ENCODE measurements at regions of chr20 and their contacts with region 1.

Region 1: GRCh38 chr20:48620519-48621254 is 207.1 kb downstream of the PREX1 start:
- DNase-seq: no peak
- H3K4me3 ChIP-seq: peak overlapping the region; percentile 42
- H3K27ac ChIP-seq: no peak overlapping the region
- H3K27me3 ChIP-seq: peaks cover 5% of the 10 kb centered on the region
- CTCF ChIP-seq: peak; percentile 97

Region 2: DNA sequence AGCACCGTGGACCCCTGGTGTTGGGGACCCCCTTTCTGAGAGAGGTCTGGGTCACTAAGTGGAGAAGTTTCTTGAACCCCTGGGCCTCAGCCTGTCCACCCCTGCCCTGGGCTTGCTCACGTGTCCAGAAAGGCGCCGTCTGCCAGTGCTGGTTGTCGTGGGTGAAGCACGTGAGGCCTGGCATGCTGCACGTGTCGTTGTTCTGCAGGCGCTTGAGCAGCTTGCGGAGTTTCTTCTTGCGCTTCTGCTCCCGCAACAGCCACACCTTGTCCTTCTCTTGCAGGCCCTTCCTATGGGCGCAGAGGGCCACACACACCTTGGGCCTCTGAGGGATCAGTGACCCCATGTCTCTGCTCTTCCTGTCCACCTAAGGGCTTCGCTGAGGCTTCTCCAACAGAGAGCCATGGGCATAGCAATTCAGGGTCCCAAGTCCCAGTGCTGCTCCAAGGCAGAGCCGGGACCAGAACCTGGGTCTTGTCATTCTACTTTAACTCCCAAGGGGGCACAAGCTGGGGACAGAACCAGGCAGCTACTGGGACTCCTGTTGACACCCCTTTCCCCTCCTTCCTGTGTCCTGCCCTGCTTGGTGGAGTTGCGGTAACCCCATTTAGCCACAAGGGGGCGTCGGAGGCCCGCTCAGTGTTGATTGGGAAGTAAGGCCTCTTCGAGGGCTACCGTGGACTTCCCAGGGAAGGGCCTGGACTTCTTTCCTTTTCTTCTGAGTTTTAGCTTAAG is 957.2 kb before region 1 on chr20:
- CTCF ChIA-PET with region 1: interaction called, 133 read pairs
- POLR2A ChIA-PET with region 1: no interaction called
- DNase-seq: peak; percentile 57
- H3K4me3 ChIP-seq: no peak overlapping the region
- H3K27ac ChIP-seq: no peak overlapping the region
- H3K27me3 ChIP-seq: no peaks in the 10 kb centered on the region
- CTCF ChIP-seq: peak; percentile 97

Region 3: DNA sequence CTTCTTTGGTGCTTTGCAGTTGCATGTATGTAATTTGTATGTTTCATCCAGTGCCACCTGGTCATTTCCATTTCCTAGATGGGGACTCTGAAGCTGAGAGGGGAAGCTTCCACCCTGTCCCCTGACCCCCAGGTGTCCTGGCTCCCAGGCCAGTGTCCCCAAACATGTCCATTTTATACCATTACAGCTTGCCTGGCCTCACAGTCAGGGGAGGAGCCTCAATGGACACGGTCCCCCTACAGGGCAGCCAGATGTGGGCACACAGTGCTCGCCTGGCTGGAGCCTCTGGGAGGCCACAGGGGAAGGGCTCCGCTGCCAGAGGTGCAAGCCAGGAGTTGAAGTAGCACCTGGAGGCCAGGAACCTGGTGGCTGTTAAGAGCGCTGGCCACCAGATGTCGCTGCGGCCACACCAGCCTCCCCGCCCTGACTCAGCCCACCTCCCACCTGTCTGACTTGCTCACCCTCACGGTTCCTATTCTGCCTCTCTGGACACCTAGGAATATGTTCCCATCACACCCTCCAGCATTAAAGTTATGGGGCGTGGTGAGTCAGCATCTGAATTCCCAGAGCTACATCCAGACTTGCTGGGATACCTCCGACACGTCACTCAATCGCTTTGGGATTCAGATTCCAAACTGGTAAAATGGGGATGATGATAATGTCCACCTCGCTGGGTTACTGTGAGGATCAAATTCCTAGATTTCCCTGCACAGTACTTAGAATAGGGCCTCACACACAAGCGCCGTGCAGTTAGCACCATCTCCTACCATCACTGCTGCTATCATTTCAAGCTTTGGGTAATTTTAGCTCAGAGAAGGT is 942.8 kb before region 1 on chr20:
- CTCF ChIA-PET with region 1: interaction called, 142 read pairs
- POLR2A ChIA-PET with region 1: no interaction called
- DNase-seq: no peak
- H3K4me3 ChIP-seq: no peak overlapping the region
- H3K27ac ChIP-seq: no peak overlapping the region
- H3K27me3 ChIP-seq: peaks cover 10% of the 10 kb centered on the region
- CTCF ChIP-seq: peak; percentile 74

Region 4: DNA sequence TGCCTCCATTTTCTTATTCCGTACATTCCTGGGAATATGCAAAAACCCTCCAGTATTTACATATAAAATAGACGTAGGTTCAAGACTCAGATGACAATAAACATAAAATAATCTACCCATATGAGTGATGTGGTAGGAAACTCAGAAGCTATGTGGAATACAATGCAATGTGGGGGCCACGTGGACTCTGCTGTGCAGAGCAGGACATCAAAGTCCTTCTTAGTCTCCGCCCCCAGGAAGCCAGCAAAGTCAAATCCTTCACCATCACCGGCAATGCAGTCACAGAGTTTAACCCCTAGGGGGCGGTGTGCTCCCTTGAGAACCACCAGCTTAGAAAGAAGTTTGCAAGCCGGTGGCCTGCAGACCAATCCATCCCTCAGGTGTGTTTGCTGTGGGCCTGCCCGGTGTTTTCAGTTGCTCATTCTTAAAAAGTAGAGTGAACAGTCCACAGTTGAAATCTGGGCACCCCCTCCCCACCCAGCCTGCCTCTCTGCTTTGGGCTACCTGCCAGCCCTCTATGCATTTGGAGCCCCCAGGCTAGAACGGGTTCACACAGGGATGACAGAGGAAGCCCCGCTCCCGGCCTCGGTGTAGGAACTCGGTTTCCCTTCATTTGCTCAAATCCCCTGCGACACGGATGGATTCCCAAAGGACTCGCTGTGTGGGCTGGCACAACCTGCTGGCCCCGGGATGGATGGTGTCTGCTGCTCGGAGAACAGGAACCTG is 895.3 kb before region 1 on chr20:
- CTCF ChIA-PET with region 1: interaction called, 16 read pairs
- POLR2A ChIA-PET with region 1: no interaction called
- DNase-seq: peak; percentile 29
- H3K4me3 ChIP-seq: no peak overlapping the region
- H3K27ac ChIP-seq: no peak overlapping the region
- H3K27me3 ChIP-seq: peaks cover 12% of the 10 kb centered on the region
- CTCF ChIP-seq: peak; percentile 80

Region 5: GRCh38 chr20:48295445-48295963 is 325.2 kb before region 1 on chr20:
- CTCF ChIA-PET with region 1: interaction called, 10 read pairs
- POLR2A ChIA-PET with region 1: no interaction called
- DNase-seq: peak; percentile 79
- H3K4me3 ChIP-seq: no peak overlapping the region
- H3K27ac ChIP-seq: peak overlapping the region; percentile 89
- H3K27me3 ChIP-seq: peaks cover 4% of the 10 kb centered on the region
- CTCF ChIP-seq: peak; percentile 48

Region 6: GRCh38 chr20:48482790-48483699 is 137.6 kb before region 1 on chr20:
- CTCF ChIA-PET with region 1: no interaction called
- POLR2A ChIA-PET with region 1: no interaction called
- DNase-seq: no peak
- H3K4me3 ChIP-seq: no peak overlapping the region
- H3K27ac ChIP-seq: no peak overlapping the region
- H3K27me3 ChIP-seq: peaks cover 9% of the 10 kb centered on the region
- CTCF ChIP-seq: no peak

Measured in AG04450 (cell line).